ENCODE measurements at regions of chr21 and their contacts with region 1.

Region 1: GRCh38 chr21:17819114-17819876 is at the start of gene C21orf91:
- DNase-seq: peak; percentile 93
- ATAC-seq: peak; percentile 89
- H3K4me3 Mint-ChIP-seq: peak within 1 kb of the TSS; percentile 91
- H3K27ac Mint-ChIP-seq: peak within 1 kb of the TSS; percentile 98
- H3K4me1 Mint-ChIP-seq: peaks cover 39% of the 10 kb centered on the region
- H3K27me3 Mint-ChIP-seq: no peaks in the 10 kb centered on the region
- total RNA-seq, gene C21orf91: 20.8 to 22.9 TPM

Region 2: DNA sequence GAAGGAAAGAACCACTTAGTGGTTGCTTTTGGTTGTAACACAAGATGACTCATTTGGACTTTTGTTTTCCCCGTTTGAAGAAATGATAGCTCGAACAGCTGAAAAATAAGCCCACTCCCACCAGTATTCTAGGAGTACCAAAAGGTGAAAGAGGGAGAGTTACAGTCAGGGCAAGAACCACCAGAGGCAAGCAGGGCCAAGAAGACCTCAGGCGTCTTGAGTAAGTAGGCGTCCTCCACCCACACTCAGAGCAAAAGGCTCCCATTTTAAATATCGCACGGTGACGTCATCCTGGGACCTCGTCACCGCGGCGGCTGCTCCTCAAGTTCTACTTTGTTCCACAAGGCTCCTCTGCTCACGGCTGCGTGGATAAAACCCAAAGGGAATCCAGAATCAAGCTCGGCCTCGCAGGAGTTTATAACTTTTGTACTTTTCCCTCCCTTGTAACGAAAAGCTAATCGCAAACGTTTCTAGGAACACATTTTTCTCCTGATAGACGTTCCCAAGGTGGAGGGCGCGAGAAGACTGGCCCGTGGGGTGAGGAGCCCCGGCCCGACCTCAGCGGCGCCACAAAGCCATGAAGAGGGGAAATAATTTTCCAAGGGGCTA is 207.8 kb before region 1 on chr21:
- CTCF ChIA-PET with region 1: no interaction called
- POLR2A ChIA-PET with region 1: interaction called, 3 read pairs
- intact Hi-C with region 1: loop called (anchors 1 to 5 kb)
- DNase-seq: peak; percentile 91
- ATAC-seq: peak; percentile 64
- H3K4me3 Mint-ChIP-seq: peak overlapping the region; percentile 75
- H3K27ac Mint-ChIP-seq: peak overlapping the region; percentile 94
- H3K4me1 Mint-ChIP-seq: peaks cover 35% of the 10 kb centered on the region
- H3K27me3 Mint-ChIP-seq: no peaks in the 10 kb centered on the region

Region 3: GRCh38 chr21:17688912-17689874 is 130.1 kb before region 1 on chr21:
- CTCF ChIA-PET with region 1: interaction called, 4 read pairs
- POLR2A ChIA-PET with region 1: no interaction called
- intact Hi-C with region 1: loop called in 1 of 2 experiments (anchors 10 kb)
- DNase-seq: peak; percentile 64
- ATAC-seq: peak; percentile 26
- H3K4me3 Mint-ChIP-seq: no peak overlapping the region
- H3K27ac Mint-ChIP-seq: no peak overlapping the region
- H3K4me1 Mint-ChIP-seq: peaks cover 35% of the 10 kb centered on the region
- H3K27me3 Mint-ChIP-seq: peaks cover 2% of the 10 kb centered on the region

Region 4: DNA sequence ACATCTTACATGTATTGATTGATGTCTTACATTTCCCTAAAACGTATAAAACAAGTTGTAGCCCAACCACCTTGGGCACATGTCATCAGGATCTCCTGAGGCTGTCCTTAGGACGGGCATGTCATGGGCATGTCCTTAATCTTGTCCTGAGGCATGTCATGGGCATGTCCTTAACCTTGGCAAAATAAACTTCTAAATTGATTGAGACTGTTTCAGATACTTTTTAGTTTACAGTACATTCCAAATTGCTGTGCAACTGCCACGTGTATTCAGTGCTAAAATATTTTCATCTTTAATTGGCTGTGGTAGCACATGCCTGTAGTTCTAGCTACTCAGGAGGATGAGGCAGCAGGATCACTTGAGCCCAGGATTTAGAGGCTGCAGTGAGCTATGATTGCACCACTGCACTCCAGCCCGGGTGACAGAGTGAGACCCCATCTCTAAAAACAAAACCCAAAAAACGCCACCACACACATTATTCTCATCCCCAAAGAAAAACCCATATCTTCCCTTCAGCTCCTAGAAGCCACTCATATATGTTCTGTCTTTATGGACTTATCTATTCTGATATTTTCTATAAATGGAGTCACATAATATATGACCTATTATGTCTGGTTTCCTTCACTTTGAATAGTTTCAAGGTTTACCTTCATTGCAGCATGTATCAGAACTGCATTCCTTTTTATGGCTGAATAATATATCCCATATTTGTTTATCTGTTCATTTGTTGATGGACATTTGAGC is 110.6 kb before region 1 on chr21:
- CTCF ChIA-PET with region 1: no interaction called
- POLR2A ChIA-PET with region 1: no interaction called
- intact Hi-C with region 1: loop called in 1 of 2 experiments (anchors 5 kb)
- DNase-seq: no peak
- ATAC-seq: no peak
- H3K4me3 Mint-ChIP-seq: no peak overlapping the region
- H3K27ac Mint-ChIP-seq: no peak overlapping the region
- H3K4me1 Mint-ChIP-seq: peaks cover 13% of the 10 kb centered on the region
- H3K27me3 Mint-ChIP-seq: peaks cover 3% of the 10 kb centered on the region

Region 5: DNA sequence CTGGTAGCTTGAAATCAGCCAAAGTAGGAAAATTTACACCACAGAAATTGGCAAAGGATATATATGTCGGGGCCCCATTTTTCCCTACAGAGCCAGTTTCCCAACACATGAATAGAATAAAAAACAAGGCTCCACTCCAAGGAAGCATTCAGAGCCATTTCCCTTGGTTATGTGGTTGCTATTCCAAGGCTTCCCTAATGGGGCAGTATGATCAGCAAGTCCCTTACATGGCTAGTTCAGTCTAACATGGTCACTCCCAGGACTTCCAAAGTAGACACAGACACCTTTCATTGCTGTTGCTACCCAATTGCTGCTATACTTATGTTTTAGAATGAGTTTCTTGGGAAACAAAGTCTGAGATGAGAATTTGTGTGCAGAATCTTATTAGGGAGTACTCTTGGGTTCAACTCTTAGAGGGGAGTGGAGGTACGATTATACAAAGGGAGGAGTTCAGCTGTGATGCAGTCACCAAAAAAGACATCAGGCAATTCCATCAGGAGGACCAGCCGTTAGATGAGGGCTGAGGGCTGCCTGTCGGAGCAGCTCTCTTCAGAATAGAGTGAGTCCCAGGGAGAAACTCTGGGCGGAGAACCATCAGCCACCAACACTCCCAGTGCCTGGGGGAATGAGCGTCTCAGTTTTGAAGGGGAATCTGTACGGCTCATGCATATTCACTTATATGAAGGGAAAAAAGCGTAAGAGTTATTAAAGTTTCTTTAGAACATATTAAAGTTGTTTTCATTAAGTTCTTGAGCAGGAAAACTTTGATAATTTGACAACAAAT is 93.1 kb before region 1 on chr21:
- CTCF ChIA-PET with region 1: no interaction called
- POLR2A ChIA-PET with region 1: no interaction called
- intact Hi-C with region 1: no loop called
- DNase-seq: no peak
- ATAC-seq: no peak
- H3K4me3 Mint-ChIP-seq: no peak overlapping the region
- H3K27ac Mint-ChIP-seq: no peak overlapping the region
- H3K4me1 Mint-ChIP-seq: no peaks in the 10 kb centered on the region
- H3K27me3 Mint-ChIP-seq: no peaks in the 10 kb centered on the region

Region 6: GRCh38 chr21:17793246-17794123 is 25.8 kb before region 1 on chr21:
- CTCF ChIA-PET with region 1: interaction called, 3 read pairs
- POLR2A ChIA-PET with region 1: interaction called, 5 read pairs
- intact Hi-C with region 1: loop called in 1 of 2 experiments (anchors 2 kb)
- DNase-seq: no peak
- ATAC-seq: peak; percentile 64
- H3K4me3 Mint-ChIP-seq: peak overlapping the region; percentile 60
- H3K27ac Mint-ChIP-seq: peak overlapping the region; percentile 83
- H3K4me1 Mint-ChIP-seq: peaks cover 66% of the 10 kb centered on the region
- H3K27me3 Mint-ChIP-seq: no peaks in the 10 kb centered on the region